Common myeloid progenitor, CD34-positive (primary cell): ENCODE measurements at regions of chr6 and their contacts with region 1.

Region 1: DNA sequence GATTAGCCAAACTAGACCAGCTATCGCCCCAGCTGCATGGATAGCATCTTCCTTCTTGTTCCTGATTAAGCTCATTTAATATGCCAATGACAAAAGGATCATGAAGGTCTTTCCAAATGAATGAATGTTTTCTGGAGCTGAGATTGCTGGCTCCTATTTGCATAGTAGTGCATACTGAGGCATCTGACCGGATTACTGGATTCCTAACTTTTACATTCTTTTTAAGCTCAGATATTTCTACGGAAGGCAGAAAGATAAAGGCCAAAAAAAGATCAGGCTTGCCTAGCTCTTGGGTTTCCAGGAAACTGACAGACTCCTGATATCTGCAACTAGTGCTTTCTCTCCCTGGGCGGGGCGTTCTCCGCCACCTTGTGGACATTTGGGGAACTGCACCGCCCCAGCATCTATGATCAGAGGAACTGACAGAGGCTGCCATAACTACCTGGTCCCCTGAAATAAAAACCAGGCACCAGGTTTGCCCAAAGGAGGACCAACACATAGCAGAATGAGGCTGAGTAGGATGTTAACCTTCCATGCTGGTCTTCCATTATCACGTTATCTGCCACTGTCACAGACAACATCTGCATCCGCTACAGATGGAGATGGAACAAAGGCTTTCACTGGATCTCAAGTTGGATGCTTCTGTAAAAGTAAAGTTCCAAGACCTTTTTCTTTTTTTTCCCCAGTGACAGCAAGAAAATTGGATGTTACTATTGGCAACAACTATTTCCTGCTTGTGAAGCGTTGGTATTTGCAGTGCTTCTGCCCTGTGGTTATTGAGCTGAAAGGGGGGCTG is 33.2 kb downstream of the NT5E start:
- DNase-seq: peak in 2 of 3 donors; percentile 69 to 74
- H3K4me3 ChIP-seq: no peak overlapping the region
- H3K27ac ChIP-seq: no peak overlapping the region
- H3K4me1 ChIP-seq: peaks cover 0 to 2% (median 0%) of the 10 kb centered on the region in 4 experiments
- H3K27me3 ChIP-seq: peaks cover 0 to 15% (median 9%) of the 10 kb centered on the region in 5 experiments

Region 2: DNA sequence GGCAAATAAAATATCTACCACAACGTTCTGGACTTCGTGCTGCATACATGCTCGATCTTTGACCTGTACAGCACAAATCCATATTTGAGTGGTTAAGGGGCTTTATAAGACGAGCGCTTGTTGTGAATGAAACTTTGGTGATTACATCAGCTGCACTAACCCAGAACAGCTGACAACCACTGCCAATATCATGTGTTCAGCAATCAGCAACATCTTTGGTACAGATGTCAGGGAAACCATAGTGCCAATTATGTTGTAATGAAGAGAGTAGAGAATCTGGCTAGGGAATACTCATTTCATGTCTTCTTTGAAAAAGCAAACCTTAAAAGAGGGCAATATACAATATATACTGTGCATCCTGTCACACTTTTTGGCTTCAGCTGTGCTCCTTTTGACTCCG is 221.8 kb before region 1 on chr6:
- CTCF ChIA-PET with region 1: no interaction called
- POLR2A ChIA-PET with region 1: no interaction called
- DNase-seq: no peak
- H3K4me3 ChIP-seq: no peak overlapping the region
- H3K27ac ChIP-seq: no peak overlapping the region
- H3K4me1 ChIP-seq: no peaks in the 10 kb centered on the region
- H3K27me3 ChIP-seq: no peaks in the 10 kb centered on the region

Region 3: DNA sequence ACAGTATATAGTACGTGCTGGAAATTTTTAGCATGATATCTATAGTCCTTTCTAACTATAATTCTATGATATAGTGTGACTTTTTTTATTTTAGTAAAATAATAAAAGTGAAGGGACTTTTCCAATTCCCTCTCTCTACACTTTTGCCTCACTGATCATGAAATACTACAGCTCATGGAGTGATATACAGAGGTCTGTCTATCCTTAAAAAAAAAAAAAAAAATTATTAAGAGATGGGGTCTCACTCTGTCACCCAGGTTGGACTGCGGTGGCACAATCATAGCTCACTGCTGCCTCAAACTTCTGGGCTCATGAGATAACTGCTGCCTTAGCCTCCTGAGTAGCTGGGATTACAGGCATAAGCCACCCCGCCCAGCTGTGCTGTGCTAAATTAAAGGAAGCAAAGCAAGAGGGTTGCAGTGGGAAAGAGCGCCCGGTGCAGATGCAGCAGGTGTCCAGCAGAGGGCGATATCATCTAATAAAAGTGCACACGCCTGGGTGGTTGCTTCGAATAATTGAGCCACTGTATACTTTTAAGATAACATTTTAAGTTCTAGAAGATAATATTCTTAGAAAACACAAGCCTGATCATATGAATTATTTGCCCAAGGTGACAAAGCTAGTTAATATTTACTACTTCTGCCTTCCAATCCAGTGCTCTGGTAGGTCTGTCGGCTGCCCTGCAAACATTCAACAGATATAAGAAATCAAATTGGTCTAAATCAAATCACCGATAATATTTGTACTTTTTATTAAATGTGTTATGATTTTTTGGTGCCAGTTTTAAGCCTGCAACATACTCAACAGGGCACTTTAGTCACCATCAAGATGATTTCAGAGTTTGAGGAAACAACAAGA is 128.1 kb before region 1 on chr6:
- CTCF ChIA-PET with region 1: interaction called, 85 read pairs
- POLR2A ChIA-PET with region 1: no interaction called
- DNase-seq: peak; percentile 56 to 72 (median 71)
- H3K4me3 ChIP-seq: no peak overlapping the region
- H3K27ac ChIP-seq: no peak overlapping the region
- H3K4me1 ChIP-seq: no peaks in the 10 kb centered on the region
- H3K27me3 ChIP-seq: peaks cover 0 to 4% (median 0%) of the 10 kb centered on the region in 5 experiments

Region 4: GRCh38 chr6:85360794-85361642 is 122.1 kb before region 1 on chr6:
- CTCF ChIA-PET with region 1: interaction called, 85 read pairs
- POLR2A ChIA-PET with region 1: no interaction called
- DNase-seq: no peak
- H3K4me3 ChIP-seq: no peak overlapping the region
- H3K27ac ChIP-seq: no peak overlapping the region
- H3K4me1 ChIP-seq: no peaks in the 10 kb centered on the region
- H3K27me3 ChIP-seq: peaks cover 0 to 4% (median 0%) of the 10 kb centered on the region in 5 experiments

Region 5: GRCh38 chr6:85460921-85461797 is 21.9 kb before region 1 on chr6:
- CTCF ChIA-PET with region 1: interaction called, 37 read pairs
- POLR2A ChIA-PET with region 1: no interaction called
- DNase-seq: peak in 2 of 3 donors; percentile 74 to 79
- H3K4me3 ChIP-seq: peak overlapping the region in 1 of 7 experiments; percentile 27
- H3K27ac ChIP-seq: peak overlapping the region in 1 of 2 experiments; percentile 1
- H3K4me1 ChIP-seq: peaks cover 12 to 44% (median 35%) of the 10 kb centered on the region in 4 experiments
- H3K27me3 ChIP-seq: peaks cover 0 to 18% (median 9%) of the 10 kb centered on the region in 5 experiments

Region 6: DNA sequence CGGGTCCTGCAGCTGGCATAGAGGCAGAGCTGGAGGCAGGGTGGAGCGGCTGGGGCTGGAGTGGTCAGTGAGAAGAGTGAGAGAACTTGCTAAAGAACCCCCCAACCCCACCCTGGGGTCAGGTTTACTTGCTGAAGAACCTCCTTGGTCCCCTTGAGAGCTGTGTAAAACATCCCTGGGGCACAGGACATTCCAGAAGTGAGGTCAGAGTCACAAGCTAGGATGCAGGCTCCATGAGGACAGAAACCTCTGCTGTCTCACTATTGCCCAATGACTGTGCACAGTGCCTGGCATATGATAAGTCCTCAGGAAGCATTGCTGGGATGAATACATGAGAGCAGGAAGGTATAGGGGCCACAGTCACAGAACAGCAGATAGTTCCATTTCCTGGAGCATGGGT is 14.8 kb before region 1 on chr6:
- CTCF ChIA-PET with region 1: interaction called, 37 read pairs
- POLR2A ChIA-PET with region 1: no interaction called
- DNase-seq: no peak
- H3K4me3 ChIP-seq: no peak overlapping the region
- H3K27ac ChIP-seq: no peak overlapping the region
- H3K4me1 ChIP-seq: peaks cover 7 to 13% (median 9%) of the 10 kb centered on the region in 4 experiments
- H3K27me3 ChIP-seq: peaks cover 0 to 4% (median 0%) of the 10 kb centered on the region in 5 experiments

Region 7: GRCh38 chr6:85494554-85495536 is 11.7 kb after region 1 on chr6:
- CTCF ChIA-PET with region 1: interaction called, 15 read pairs
- POLR2A ChIA-PET with region 1: no interaction called
- DNase-seq: no peak
- H3K4me3 ChIP-seq: no peak overlapping the region
- H3K27ac ChIP-seq: no peak overlapping the region
- H3K4me1 ChIP-seq: peaks cover 0 to 7% (median 4%) of the 10 kb centered on the region in 4 experiments
- H3K27me3 ChIP-seq: peaks cover 0 to 62% (median 10%) of the 10 kb centered on the region in 5 experiments

Region 8: GRCh38 chr6:85537055-85537494 is 54.0 kb after region 1 on chr6:
- CTCF ChIA-PET with region 1: interaction called, 10 read pairs
- POLR2A ChIA-PET with region 1: no interaction called
- DNase-seq: peak; percentile 9 to 21 (median 14)
- H3K4me3 ChIP-seq: no peak overlapping the region
- H3K27ac ChIP-seq: no peak overlapping the region
- H3K4me1 ChIP-seq: no peaks in the 10 kb centered on the region
- H3K27me3 ChIP-seq: no peaks in the 10 kb centered on the region